B cell (primary cell): ENCODE measurements at regions of chr11 and their contacts with region 1.

Region 1: DNA sequence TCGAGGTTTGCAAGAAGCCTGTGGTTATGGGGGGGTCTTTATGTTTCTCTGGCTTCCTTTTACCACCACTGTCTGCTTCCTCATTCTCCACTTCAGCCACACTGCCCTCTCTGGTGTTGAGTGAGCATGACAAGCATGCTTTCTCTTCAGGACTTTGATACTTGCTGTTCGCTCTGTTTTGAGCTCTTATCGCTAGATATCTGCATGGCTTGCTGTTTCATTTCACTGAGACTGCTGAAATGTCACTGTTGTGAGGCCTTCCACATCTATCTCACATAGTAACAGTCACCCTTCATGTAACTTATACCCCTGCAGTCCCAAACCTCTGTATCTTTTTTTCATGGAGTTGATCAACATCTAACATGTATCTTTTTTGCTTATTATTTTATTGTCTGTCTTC is 59.8 kb downstream of the TMEM135 start:
- DNase-seq: peak; percentile 57
- ATAC-seq: peak; percentile 68
- H3K4me3 ChIP-seq: no peak overlapping the region
- H3K4me3 Mint-ChIP-seq: no peak overlapping the region
- H3K27ac ChIP-seq: no peak overlapping the region
- H3K27ac Mint-ChIP-seq: peak overlapping the region; percentile 8
- H3K4me1 ChIP-seq: peaks cover 3 to 5% of the 10 kb centered on the region in 2 donors
- H3K4me1 Mint-ChIP-seq: peaks cover 8% of the 10 kb centered on the region
- H3K27me3 ChIP-seq: no peaks in the 10 kb centered on the region
- H3K27me3 Mint-ChIP-seq: no peaks in the 10 kb centered on the region
- CTCF ChIP-seq: peak; percentile 77

Region 2: GRCh38 chr11:86978756-86979608 is 118.6 kb before region 1 on chr11:
- CTCF ChIA-PET with region 1: interaction called, 5 read pairs
- POLR2A ChIA-PET with region 1: no interaction called
- intact Hi-C with region 1: loop called (anchors 5 kb)
- DNase-seq: peak; percentile 44
- ATAC-seq: no peak
- H3K4me3 ChIP-seq: no peak overlapping the region
- H3K4me3 Mint-ChIP-seq: no peak overlapping the region
- H3K27ac ChIP-seq: no peak overlapping the region
- H3K27ac Mint-ChIP-seq: no peak overlapping the region
- H3K4me1 ChIP-seq: no peaks in the 10 kb centered on the region
- H3K4me1 Mint-ChIP-seq: no peaks in the 10 kb centered on the region
- H3K27me3 ChIP-seq: no peaks in the 10 kb centered on the region
- H3K27me3 Mint-ChIP-seq: peaks cover 3% of the 10 kb centered on the region
- CTCF ChIP-seq: peak; percentile 72